Activated naive CD4-positive, alpha-beta T cell treated with anti-CD3 and anti-CD28 coated beads for 36 hours (primary cell): ENCODE measurements at regions of chr17 and their contacts with region 1.

Region 1: GRCh38 chr17:16438557-16439302 is 23.4 kb downstream of the TRPV2 start:
- DNase-seq: peak; percentile 98
- H3K4me3 Mint-ChIP-seq: peak overlapping the region; percentile 99
- H3K27ac Mint-ChIP-seq: peak overlapping the region; percentile 99
- H3K4me1 Mint-ChIP-seq: peaks cover 39% of the 10 kb centered on the region
- H3K27me3 Mint-ChIP-seq: no peaks in the 10 kb centered on the region

Region 2: DNA sequence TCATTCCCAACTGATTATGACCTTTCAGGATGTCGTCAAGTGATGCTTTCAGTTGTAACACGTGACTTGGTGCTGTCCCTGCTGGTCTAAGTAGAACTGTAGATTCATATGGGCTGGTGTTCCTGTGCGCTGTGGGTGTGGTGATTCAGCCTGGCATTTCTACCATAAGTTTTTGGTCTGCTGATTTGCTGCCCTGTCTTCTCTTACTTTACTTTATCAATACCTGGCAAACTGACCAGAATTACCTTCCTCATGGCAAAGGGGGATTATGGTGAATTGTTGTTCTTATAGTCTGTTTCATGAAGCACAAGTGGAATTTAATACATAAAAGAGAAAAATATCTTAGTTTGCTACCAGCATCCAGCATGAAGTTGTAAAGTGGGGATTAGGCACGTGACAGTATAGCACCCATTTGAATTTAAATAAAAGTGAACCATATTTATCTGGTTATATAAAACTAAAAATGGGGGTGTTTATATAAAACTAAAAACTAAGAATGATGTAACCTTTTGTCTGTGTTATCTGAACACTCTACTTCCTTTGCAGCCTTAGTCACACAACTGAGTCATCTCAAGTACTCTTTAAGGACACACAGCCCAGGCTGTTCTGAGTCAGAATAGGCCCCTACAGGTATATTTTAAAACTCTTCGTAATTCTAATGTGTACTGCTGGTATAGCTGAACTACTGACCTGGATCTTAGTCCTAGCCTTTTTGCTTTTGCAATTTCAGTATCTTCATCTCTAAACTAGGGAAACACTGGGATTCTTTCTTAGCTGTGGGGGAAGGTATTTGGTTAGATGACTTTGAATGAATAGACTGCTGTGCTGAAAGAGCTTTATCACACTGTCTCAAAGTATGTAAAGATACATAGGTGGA is 410.8 kb before region 1 on chr17:
- CTCF ChIA-PET with region 1: no interaction called
- intact Hi-C with region 1: loop called (anchors 1 kb)
- DNase-seq: peak; percentile 82
- H3K4me3 Mint-ChIP-seq: peak overlapping the region; percentile 52
- H3K27ac Mint-ChIP-seq: peak overlapping the region; percentile 97
- H3K4me1 Mint-ChIP-seq: peaks cover 40% of the 10 kb centered on the region
- H3K27me3 Mint-ChIP-seq: no peaks in the 10 kb centered on the region

Region 3: GRCh38 chr17:16269658-16270057 is 169.1 kb before region 1 on chr17:
- CTCF ChIA-PET with region 1: no interaction called
- intact Hi-C with region 1: no loop called
- DNase-seq: no peak
- H3K4me3 Mint-ChIP-seq: no peak overlapping the region
- H3K27ac Mint-ChIP-seq: no peak overlapping the region
- H3K4me1 Mint-ChIP-seq: peaks cover 28% of the 10 kb centered on the region
- H3K27me3 Mint-ChIP-seq: no peaks in the 10 kb centered on the region

Region 4: GRCh38 chr17:16363749-16364536 is 74.8 kb before region 1 on chr17:
- CTCF ChIA-PET with region 1: interaction called, 12 read pairs
- intact Hi-C with region 1: loop called (anchors 5 kb)
- DNase-seq: peak; percentile 91
- H3K4me3 Mint-ChIP-seq: no peak overlapping the region
- H3K27ac Mint-ChIP-seq: no peak overlapping the region
- H3K4me1 Mint-ChIP-seq: no peaks in the 10 kb centered on the region
- H3K27me3 Mint-ChIP-seq: no peaks in the 10 kb centered on the region

Region 5: GRCh38 chr17:16398270-16399267 is 40.2 kb before region 1 on chr17:
- CTCF ChIA-PET with region 1: no interaction called
- intact Hi-C with region 1: no loop called
- DNase-seq: peak; percentile 48
- H3K4me3 Mint-ChIP-seq: no peak overlapping the region
- H3K27ac Mint-ChIP-seq: no peak overlapping the region
- H3K4me1 Mint-ChIP-seq: peaks cover 7% of the 10 kb centered on the region
- H3K27me3 Mint-ChIP-seq: no peaks in the 10 kb centered on the region

Region 6: DNA sequence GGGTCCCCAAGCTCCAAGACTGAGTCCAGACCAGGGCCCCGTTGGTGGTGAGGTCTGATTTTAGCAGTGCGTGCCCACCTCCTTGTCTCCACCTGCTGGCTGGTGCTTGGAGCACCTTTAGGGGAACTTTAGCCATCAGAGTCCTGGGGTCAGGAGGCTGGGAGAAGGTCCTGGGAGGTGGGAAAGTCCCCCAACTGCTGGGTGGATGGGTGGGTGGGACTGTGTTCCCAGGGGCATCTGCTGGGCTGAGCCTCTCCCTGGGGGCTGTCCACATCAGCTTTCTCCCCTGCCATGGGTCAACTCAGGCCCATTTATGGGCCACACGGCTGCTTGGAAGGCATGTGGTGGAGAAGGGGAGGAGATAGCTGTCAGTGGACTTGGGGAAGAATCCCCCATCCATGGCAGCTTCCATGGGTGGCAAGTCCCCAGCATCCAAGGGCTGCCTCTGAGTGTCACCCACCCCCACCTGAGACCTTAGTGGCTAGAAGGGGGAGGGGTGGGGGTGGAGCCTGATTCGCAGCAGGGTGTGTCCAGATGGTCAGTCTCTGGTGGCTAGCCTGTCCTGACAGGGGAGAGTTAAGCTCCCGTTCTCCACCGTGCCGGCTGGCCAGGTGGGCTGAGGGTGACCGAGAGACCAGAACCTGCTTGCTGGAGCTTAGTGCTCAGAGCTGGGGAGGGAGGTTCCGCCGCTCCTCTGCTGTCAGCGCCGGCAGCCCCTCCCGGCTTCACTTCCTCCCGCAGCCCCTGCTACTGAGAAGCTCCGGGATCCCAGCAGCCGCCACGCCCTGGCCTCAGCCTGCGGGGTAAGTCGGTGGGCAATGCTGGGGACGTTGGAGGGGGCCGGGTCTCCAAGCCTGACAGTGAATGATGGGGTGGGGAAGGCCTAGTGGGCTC is 23.5 kb before region 1 on chr17 and contains the start of gene TRPV2:
- CTCF ChIA-PET with region 1: interaction called, 10 read pairs
- intact Hi-C with region 1: loop called (anchors 1 kb)
- DNase-seq: peak; percentile 67
- H3K4me3 Mint-ChIP-seq: peak within 1 kb of the TSS; percentile 98
- H3K27ac Mint-ChIP-seq: peak within 1 kb of the TSS; percentile 100
- H3K4me1 Mint-ChIP-seq: peaks cover 43% of the 10 kb centered on the region
- H3K27me3 Mint-ChIP-seq: no peaks in the 10 kb centered on the region
- total RNA-seq, gene TRPV2: 23.7 to 24.8 TPM

Region 7: GRCh38 chr17:16453493-16453851 is 14.7 kb after region 1 on chr17:
- CTCF ChIA-PET with region 1: interaction called, 17 read pairs
- intact Hi-C with region 1: no loop called
- DNase-seq: no peak
- H3K4me3 Mint-ChIP-seq: no peak overlapping the region
- H3K27ac Mint-ChIP-seq: no peak overlapping the region
- H3K4me1 Mint-ChIP-seq: peaks cover 11% of the 10 kb centered on the region
- H3K27me3 Mint-ChIP-seq: no peaks in the 10 kb centered on the region

Region 8: GRCh38 chr17:16653209-16654041 is 214.7 kb after region 1 on chr17 and contains the start of gene ZNF624:
- CTCF ChIA-PET with region 1: no interaction called
- intact Hi-C with region 1: loop called (anchors 5 kb)
- DNase-seq: peak; percentile 91
- H3K4me3 Mint-ChIP-seq: peak within 1 kb of the TSS; percentile 82
- H3K27ac Mint-ChIP-seq: peak within 1 kb of the TSS; percentile 33
- H3K4me1 Mint-ChIP-seq: peaks cover 17% of the 10 kb centered on the region
- H3K27me3 Mint-ChIP-seq: peaks cover 2% of the 10 kb centered on the region
- total RNA-seq, gene ZNF624: 3.9 TPM